ENCODE measurements at regions of chr2 and their contacts with region 1.

Region 1: DNA sequence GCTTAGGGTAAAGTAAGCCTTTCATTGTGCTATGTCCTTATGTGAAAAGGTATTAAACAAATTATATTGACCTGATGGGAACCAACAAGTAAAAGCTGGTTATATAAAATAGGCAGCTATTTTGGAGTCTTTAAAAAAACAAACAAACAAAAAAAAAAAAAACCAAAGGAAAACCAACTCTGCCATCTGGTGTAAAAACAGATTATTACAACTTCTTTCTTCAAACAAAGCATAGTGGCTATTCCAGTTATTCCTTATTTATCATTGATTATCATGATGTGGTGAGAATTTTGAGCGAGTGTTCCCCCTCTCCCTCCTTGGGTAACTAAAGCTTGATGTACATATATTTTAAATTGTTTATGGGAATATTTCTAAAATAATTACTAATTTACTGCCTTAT is 122.4 kb upstream of the FHL2 start:
- DNase-seq: no peak
- ATAC-seq: no peak

Region 2: GRCh38 chr2:105344704-105345345 is 176.4 kb before region 1 on chr2:
- intact Hi-C with region 1: loop called (anchors 10 kb)
- DNase-seq: no peak
- ATAC-seq: peak; percentile 55

Region 3: GRCh38 chr2:105369747-105370690 is 151.2 kb before region 1 on chr2:
- intact Hi-C with region 1: loop called (anchors 5 kb)
- DNase-seq: peak; percentile 87
- ATAC-seq: peak; percentile 12

Region 4: GRCh38 chr2:105403785-105404698 is 117.2 kb before region 1 on chr2:
- intact Hi-C with region 1: no loop called
- DNase-seq: no peak
- ATAC-seq: peak; percentile 6

Measured in left ventricle myocardium superior (tissue), 1 donor.